ENCODE measurements at regions of chr1 and their contacts with region 1.

Region 1: GRCh38 chr1:33392639-33393038 is 38.3 kb downstream of the PHC2 start:
- DNase-seq: no peak
- ATAC-seq: no peak
- H3K4me3 ChIP-seq: no peak overlapping the region
- H3K27ac ChIP-seq: no peak overlapping the region
- H3K4me1 ChIP-seq: no peaks in the 10 kb centered on the region
- H3K27me3 ChIP-seq: no peaks in the 10 kb centered on the region
- CTCF ChIP-seq: no peak

Region 2: GRCh38 chr1:33455539-33456501 is 63.2 kb after region 1 on chr1:
- CTCF ChIA-PET with region 1: no interaction called
- POLR2A ChIA-PET with region 1: no interaction called
- intact Hi-C with region 1: loop called (anchors 5 kb)
- DNase-seq: peak; percentile 83
- ATAC-seq: peak; percentile 89
- H3K4me3 ChIP-seq: no peak overlapping the region
- H3K27ac ChIP-seq: peak overlapping the region; percentile 6; the same call in 1 of the 2 replicates
- H3K4me1 ChIP-seq: peaks cover 34% of the 10 kb centered on the region
- H3K27me3 ChIP-seq: no peaks in the 10 kb centered on the region
- CTCF ChIP-seq: peak; percentile 89

Measured in PC-3 (cell line).